Activated T-helper 1 cell treated with anti-CD3 and anti-CD28 coated beads, Interleukin-12 subunit alpha, Interleukin-12 subunit beta, Interleukin-2, Interleukin-4 antibody, amounts not matched to agents 30 ng/mL and 10 ng/mL and 1 ng/mL, durations not matched to agents 14 hours and 24 hours and 36 hours (primary cell): ENCODE measurements at regions of chr4 and their contacts with region 1.

Region 1: DNA sequence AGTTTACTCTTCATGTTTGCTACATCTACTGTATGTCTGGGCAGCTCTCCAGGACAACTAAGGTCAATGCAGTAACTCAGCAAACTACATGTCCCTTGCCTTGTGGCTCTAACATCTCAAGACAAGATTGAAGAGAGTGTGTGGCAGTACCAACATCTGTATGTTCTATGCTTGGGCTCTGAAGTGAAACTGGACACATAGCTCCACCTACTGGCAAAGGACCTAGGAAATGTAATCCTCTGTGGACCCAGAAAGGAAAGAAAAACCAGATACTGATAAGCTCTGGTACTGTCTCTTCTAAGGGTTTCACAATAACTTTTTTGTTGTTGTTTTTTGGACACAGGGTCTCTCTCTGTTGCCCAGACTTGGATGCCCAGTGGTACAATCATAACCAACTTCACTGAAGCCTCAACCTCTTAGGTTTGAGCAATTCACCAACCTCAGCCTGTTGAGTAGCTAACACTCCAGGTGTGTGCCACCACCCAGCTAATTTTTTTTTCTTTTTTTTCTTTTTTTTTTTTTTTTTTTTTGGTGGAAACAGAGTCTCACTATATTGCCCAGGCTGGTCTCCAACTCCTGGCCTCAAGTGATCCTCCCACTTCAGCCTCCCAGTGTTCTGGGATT is 64.1 kb downstream of the QDPR start:
- DNase-seq: peak; percentile 37
- H3K4me3 Mint-ChIP-seq: no peak overlapping the region
- H3K27ac Mint-ChIP-seq: no peak overlapping the region
- H3K4me1 Mint-ChIP-seq: no peaks in the 10 kb centered on the region
- H3K27me3 Mint-ChIP-seq: peaks cover 5% of the 10 kb centered on the region

Region 2: GRCh38 chr4:17276776-17277175 is 171.0 kb before region 1 on chr4:
- intact Hi-C with region 1: loop called (anchors 5 kb)
- DNase-seq: no peak
- H3K4me3 Mint-ChIP-seq: no peak overlapping the region
- H3K27ac Mint-ChIP-seq: no peak overlapping the region
- H3K4me1 Mint-ChIP-seq: no peaks in the 10 kb centered on the region
- H3K27me3 Mint-ChIP-seq: peaks cover 4% of the 10 kb centered on the region

Region 3: GRCh38 chr4:17347445-17347844 is 100.3 kb before region 1 on chr4:
- intact Hi-C with region 1: loop called (anchors 1 kb)
- DNase-seq: peak; percentile 8
- H3K4me3 Mint-ChIP-seq: no peak overlapping the region
- H3K27ac Mint-ChIP-seq: no peak overlapping the region
- H3K4me1 Mint-ChIP-seq: no peaks in the 10 kb centered on the region
- H3K27me3 Mint-ChIP-seq: peaks cover 3% of the 10 kb centered on the region